Transverse colon (tissue), 4 donors: ENCODE measurements at regions of chr1 and their contacts with region 1.

Region 1: GRCh38 chr1:112619520-112620376 is at the start of gene CAPZA1:
- DNase-seq: peak; percentile 95
- H3K4me3 ChIP-seq: peak within 1 kb of the TSS; percentile 81 to 98 (median 86)
- H3K27ac ChIP-seq: peak within 1 kb of the TSS; percentile 93 to 98 (median 97)
- H3K4me1 ChIP-seq: peaks cover 16 to 45% (median 35%) of the 10 kb centered on the region in 4 donors
- H3K27me3 ChIP-seq: no peaks in the 10 kb centered on the region
- CTCF ChIP-seq: no peak
- EP300 ChIP-seq: peak; percentile 1
- POLR2A ChIP-seq: peak; percentile 92
- total RNA-seq, gene CAPZA1: 44.2 to 228 (median 123) TPM

Region 2: DNA sequence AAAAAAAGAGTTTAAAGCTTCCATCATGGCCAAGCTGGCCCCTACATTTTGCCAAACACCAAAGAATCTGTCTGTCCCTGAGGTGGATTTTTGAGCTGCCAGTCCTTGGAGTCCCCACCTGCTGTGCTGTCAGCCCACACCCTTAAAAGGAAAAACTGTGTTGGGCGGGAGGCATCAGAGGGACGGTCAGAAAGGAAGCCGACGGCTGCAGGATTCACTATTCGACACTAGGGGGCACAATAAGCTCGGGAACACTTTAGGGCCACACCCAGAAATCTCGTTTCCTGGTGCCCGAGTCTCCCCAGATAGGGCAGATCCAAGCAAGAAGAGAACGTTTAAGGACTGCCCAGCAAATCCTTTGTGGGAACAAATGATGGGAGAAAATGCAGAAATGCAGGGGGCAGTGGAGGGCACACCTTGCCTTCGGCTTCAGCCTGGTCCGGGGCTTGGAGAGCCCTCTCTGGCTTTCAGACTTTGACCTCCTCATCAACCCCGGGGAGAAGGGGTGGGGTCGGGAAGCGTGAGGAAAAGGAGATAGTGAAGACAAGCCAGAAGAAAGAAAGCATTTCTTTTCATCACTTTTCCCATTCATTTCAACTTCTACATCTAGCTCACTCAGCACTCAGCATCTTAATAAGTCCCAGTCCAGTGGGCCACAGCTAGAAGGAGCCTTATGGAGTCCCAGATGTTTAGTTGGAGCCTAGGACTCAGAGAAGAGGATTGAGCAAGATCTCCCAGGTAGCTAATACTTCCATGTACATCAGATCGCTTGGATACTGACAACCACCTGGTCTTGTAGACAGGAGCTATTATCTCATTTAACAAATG is 228.8 kb before region 1 on chr1:
- in situ Hi-C with region 1: loop called (anchors 10 to 25 kb)
- intact Hi-C with region 1: no loop called
- DNase-seq: peak; percentile 95
- H3K4me3 ChIP-seq: peak overlapping the region in 3 of 4 donors; percentile 25 to 51 (median 34)
- H3K27ac ChIP-seq: peak overlapping the region; percentile 89 to 97 (median 92)
- H3K4me1 ChIP-seq: peaks cover 9 to 48% (median 39%) of the 10 kb centered on the region in 4 donors
- H3K27me3 ChIP-seq: no peaks in the 10 kb centered on the region
- CTCF ChIP-seq: peak; percentile 87 to 99 (median 92)
- EP300 ChIP-seq: no peak
- POLR2A ChIP-seq: peak; percentile 48

Region 3: DNA sequence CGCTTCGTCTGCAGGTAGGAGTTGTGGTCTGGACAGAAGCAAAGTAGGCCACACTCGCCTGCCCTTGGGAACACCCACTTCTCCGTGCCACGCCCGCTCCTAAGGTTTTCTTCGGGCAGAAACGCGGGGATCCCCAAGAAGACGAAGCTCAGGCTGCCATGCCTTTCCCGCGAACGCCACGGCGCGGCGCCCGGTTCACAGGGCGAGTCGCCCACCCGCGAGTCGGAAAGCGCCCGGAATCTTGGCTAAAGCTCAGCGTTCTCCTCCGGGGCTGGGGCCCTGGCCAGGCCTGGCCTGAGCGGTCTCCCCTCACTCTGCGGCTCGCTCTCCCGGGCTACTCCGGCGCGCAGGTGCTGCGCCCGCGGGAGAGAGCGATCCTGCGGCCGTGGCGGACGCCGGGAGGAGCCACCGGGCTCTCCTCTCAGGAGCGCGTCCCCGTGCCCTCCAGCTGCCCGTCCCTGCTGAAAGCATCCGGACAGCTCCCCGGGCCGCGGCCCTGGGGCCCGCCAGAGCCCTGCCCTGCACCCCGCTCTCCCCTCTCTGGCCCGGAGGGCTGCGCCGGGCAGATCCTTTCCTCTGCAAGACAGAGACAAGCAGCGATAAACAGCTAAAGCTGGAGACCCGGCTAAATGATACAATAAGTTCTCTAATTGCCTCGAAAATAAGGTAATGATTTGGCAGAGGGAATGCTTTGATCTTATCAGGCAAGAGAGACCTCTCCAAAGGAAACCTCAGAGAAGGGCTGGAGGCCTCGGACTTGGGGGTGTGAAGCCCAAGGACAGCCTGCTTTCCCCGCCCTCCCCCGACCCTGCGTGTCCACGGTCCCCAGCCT is 117.7 kb before region 1 on chr1:
- in situ Hi-C with region 1: loop called in 2 of 4 experiments (anchors 10 to 25 kb)
- intact Hi-C with region 1: no loop called
- DNase-seq: peak; percentile 79
- H3K4me3 ChIP-seq: peak overlapping the region; percentile 25 to 69 (median 43)
- H3K27ac ChIP-seq: peak overlapping the region; percentile 26 to 56 (median 50)
- H3K4me1 ChIP-seq: peaks cover 4 to 14% (median 11%) of the 10 kb centered on the region in 4 donors
- H3K27me3 ChIP-seq: peaks cover 27% of the 10 kb centered on the region
- CTCF ChIP-seq: peak; percentile 61 to 83 (median 69)
- EP300 ChIP-seq: no peak
- POLR2A ChIP-seq: no peak

Region 4: DNA sequence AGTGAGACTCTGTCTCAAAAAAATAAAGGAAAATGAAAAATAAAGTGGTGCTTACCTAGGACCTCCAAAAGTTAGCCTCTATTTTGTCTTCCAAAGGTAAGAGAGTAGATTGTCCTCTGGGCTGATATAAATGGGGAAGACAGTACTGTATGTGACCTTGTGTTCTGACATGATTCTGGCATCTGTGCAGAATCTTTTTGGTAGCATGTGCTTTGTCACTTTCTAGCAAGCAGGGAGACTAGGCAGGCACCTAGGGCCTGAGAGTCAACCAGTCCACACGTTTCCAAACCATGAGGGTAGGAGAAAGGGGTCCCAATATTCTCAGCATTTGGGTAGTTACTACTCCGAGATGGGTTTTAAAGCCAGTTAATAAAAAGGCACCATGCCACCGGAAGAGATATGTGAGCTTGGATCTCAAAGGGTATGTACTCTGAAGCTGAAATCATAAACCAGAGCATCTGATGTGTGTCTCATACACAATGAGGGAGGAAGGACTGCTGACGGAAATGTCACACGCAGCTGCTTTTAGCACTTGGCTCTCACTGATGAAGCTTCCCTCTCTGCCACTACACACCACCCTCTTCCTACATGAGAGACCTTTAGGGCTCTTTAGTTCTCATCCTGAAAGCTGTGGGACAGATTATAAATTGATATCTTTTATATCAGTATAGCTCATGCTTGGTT is 363.2 kb after region 1 on chr1:
- in situ Hi-C with region 1: no loop called
- intact Hi-C with region 1: no loop called
- DNase-seq: no peak
- H3K4me3 ChIP-seq: no peak overlapping the region
- H3K27ac ChIP-seq: peak overlapping the region in 1 of 4 donors; percentile 12
- H3K4me1 ChIP-seq: peaks cover 0 to 18% (median 3%) of the 10 kb centered on the region in 4 donors
- H3K27me3 ChIP-seq: no peaks in the 10 kb centered on the region
- CTCF ChIP-seq: no peak
- EP300 ChIP-seq: no peak
- POLR2A ChIP-seq: no peak